Naive thymus-derived CD4-positive, alpha-beta T cell (primary cell): ENCODE measurements at regions of chr13 and their contacts with region 1.

Region 1: DNA sequence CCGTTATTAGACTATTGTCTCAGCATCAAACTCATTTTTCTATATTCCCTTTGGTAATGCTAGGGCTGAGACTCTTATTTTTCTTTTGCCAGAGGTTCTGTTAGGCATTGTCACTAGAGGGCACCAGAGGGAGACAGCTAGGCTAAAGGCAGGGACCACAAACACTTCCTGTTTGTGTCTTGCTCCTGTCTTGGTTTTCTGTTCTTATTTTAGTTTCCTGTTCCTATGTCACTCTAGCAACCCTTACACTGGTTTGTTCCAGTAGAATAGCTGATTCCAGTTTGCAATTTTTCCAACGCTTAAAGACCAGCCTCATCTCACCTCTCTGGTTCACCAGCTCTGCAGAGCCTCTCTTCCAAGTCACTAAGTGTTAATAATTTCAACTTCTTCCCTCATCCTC is 772.0 kb downstream of the DIAPH3 start:
- DNase-seq: peak; percentile 8 to 80 (median 73)
- ATAC-seq: peak; percentile 95
- H3K4me3 ChIP-seq: no peak overlapping the region
- H3K4me3 Mint-ChIP-seq: no peak overlapping the region
- H3K27ac ChIP-seq: no peak overlapping the region
- H3K27ac Mint-ChIP-seq: no peak overlapping the region
- H3K4me1 ChIP-seq: peaks cover 0 to 8% of the 10 kb centered on the region in 2 donors
- H3K4me1 Mint-ChIP-seq: peaks cover 0 to 6% (median 0%) of the 10 kb centered on the region in 7 donors
- H3K27me3 ChIP-seq: no peaks in the 10 kb centered on the region
- H3K27me3 Mint-ChIP-seq: peaks cover 0 to 22% (median 6%) of the 10 kb centered on the region in 5 donors

Region 2: DNA sequence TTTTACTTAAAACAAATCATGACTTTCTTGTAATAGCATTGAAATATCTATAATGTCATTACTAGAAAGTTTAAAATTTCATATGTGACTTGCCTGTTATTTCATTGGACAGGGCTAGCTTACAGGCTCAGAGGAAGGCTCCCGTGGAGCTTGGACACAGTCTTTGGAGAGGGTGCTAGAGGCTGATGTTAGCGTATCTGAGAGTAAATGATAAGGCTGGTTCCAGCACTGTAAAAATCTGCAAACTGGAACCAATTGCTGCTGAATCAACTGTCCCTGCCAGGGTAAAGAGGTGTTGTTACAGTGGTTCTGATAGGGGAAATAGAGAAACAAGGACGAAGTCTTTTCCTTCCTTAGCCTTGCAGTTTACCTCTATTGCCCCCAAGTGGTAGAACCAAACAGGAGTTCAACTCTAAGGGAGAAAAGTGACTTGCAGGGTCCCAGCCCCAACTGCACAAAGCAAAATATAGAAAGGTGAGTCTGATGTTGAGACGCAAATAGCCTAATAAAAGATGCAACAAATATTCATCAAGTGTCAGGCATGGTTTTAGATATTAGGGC is 129.7 kb before region 1 on chr13:
- CTCF ChIA-PET with region 1: no interaction called
- POLR2A ChIA-PET with region 1: no interaction called
- intact Hi-C with region 1: no loop called
- DNase-seq: no peak
- ATAC-seq: no peak
- H3K4me3 ChIP-seq: no peak overlapping the region
- H3K4me3 Mint-ChIP-seq: no peak overlapping the region
- H3K27ac ChIP-seq: no peak overlapping the region
- H3K27ac Mint-ChIP-seq: no peak overlapping the region
- H3K4me1 ChIP-seq: no peaks in the 10 kb centered on the region
- H3K4me1 Mint-ChIP-seq: no peaks in the 10 kb centered on the region
- H3K27me3 ChIP-seq: no peaks in the 10 kb centered on the region
- H3K27me3 Mint-ChIP-seq: no peaks in the 10 kb centered on the region

Region 3: GRCh38 chr13:59425211-59425721 is 33.6 kb after region 1 on chr13:
- CTCF ChIA-PET with region 1: no interaction called
- POLR2A ChIA-PET with region 1: no interaction called
- intact Hi-C with region 1: no loop called
- DNase-seq: no peak
- ATAC-seq: no peak
- H3K4me3 ChIP-seq: no peak overlapping the region
- H3K4me3 Mint-ChIP-seq: no peak overlapping the region
- H3K27ac ChIP-seq: no peak overlapping the region
- H3K27ac Mint-ChIP-seq: no peak overlapping the region
- H3K4me1 ChIP-seq: no peaks in the 10 kb centered on the region
- H3K4me1 Mint-ChIP-seq: no peaks in the 10 kb centered on the region
- H3K27me3 ChIP-seq: no peaks in the 10 kb centered on the region
- H3K27me3 Mint-ChIP-seq: peaks cover 0 to 10% (median 6%) of the 10 kb centered on the region in 5 donors

Region 4: GRCh38 chr13:59677966-59678814 is 286.5 kb after region 1 on chr13:
- CTCF ChIA-PET with region 1: interaction called, 40 read pairs
- POLR2A ChIA-PET with region 1: interaction called, 3 read pairs
- intact Hi-C with region 1: loop called (anchors 1 kb)
- DNase-seq: peak in 5 of 9 donors; percentile 21 to 34 (median 22)
- ATAC-seq: peak; percentile 67
- H3K4me3 ChIP-seq: no peak overlapping the region
- H3K4me3 Mint-ChIP-seq: no peak overlapping the region
- H3K27ac ChIP-seq: no peak overlapping the region
- H3K27ac Mint-ChIP-seq: peak overlapping the region in 1 of 9 donors; percentile 48
- H3K4me1 ChIP-seq: no peaks in the 10 kb centered on the region
- H3K4me1 Mint-ChIP-seq: peaks cover 0 to 5% (median under 1%) of the 10 kb centered on the region in 7 donors
- H3K27me3 ChIP-seq: no peaks in the 10 kb centered on the region
- H3K27me3 Mint-ChIP-seq: no peaks in the 10 kb centered on the region

Region 5: DNA sequence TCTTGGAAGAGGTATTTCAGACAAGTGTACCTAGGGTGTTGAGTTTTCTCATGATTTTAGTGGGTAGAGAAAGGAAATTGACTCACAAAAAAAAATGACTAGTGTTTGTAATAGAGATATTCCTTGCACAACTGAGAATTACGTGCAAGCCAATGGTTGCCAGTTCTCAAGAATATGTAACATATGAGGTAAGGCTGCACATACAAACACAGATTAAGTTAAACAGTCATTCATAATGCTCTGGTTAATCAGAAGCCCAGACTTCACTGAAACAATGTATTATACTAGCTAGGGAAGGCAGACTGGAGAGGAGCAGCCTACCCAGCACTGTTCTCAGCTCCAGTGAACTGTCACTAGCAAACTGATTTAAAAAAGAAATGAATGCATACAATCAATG is 353.7 kb after region 1 on chr13:
- CTCF ChIA-PET with region 1: no interaction called
- POLR2A ChIA-PET with region 1: no interaction called
- intact Hi-C with region 1: no loop called
- DNase-seq: no peak
- ATAC-seq: no peak
- H3K4me3 ChIP-seq: no peak overlapping the region
- H3K4me3 Mint-ChIP-seq: no peak overlapping the region
- H3K27ac ChIP-seq: no peak overlapping the region
- H3K27ac Mint-ChIP-seq: no peak overlapping the region
- H3K4me1 ChIP-seq: no peaks in the 10 kb centered on the region
- H3K4me1 Mint-ChIP-seq: peaks cover 0 to 5% (median 2%) of the 10 kb centered on the region in 7 donors
- H3K27me3 ChIP-seq: no peaks in the 10 kb centered on the region
- H3K27me3 Mint-ChIP-seq: peaks cover 0 to 4% (median 0%) of the 10 kb centered on the region in 5 donors

Region 6: GRCh38 chr13:59906413-59907049 is 514.8 kb after region 1 on chr13:
- CTCF ChIA-PET with region 1: no interaction called
- POLR2A ChIA-PET with region 1: no interaction called
- intact Hi-C with region 1: loop called in 1 of 2 experiments (anchors 1 kb)
- DNase-seq: peak in 2 of 9 donors; percentile 2 to 3
- ATAC-seq: no peak
- H3K4me3 ChIP-seq: no peak overlapping the region
- H3K4me3 Mint-ChIP-seq: no peak overlapping the region
- H3K27ac ChIP-seq: no peak overlapping the region
- H3K27ac Mint-ChIP-seq: no peak overlapping the region
- H3K4me1 ChIP-seq: no peaks in the 10 kb centered on the region
- H3K4me1 Mint-ChIP-seq: peaks cover 0 to 2% (median 0%) of the 10 kb centered on the region in 7 donors
- H3K27me3 ChIP-seq: no peaks in the 10 kb centered on the region
- H3K27me3 Mint-ChIP-seq: no peaks in the 10 kb centered on the region

Region 7: GRCh38 chr13:60329221-60329983 is 937.7 kb after region 1 on chr13:
- CTCF ChIA-PET with region 1: interaction called, 6 read pairs
- POLR2A ChIA-PET with region 1: no interaction called
- intact Hi-C with region 1: loop called in 1 of 2 experiments (anchors 1 kb)
- DNase-seq: peak in 1 of 9 donors; percentile 8
- ATAC-seq: no peak
- H3K4me3 ChIP-seq: no peak overlapping the region
- H3K4me3 Mint-ChIP-seq: no peak overlapping the region
- H3K27ac ChIP-seq: no peak overlapping the region
- H3K27ac Mint-ChIP-seq: peak overlapping the region in 1 of 9 donors; percentile 5
- H3K4me1 ChIP-seq: no peaks in the 10 kb centered on the region
- H3K4me1 Mint-ChIP-seq: peaks cover 0 to 5% (median 0%) of the 10 kb centered on the region in 7 donors
- H3K27me3 ChIP-seq: no peaks in the 10 kb centered on the region
- H3K27me3 Mint-ChIP-seq: peaks cover 0 to 21% (median 0%) of the 10 kb centered on the region in 5 donors

Region 8: DNA sequence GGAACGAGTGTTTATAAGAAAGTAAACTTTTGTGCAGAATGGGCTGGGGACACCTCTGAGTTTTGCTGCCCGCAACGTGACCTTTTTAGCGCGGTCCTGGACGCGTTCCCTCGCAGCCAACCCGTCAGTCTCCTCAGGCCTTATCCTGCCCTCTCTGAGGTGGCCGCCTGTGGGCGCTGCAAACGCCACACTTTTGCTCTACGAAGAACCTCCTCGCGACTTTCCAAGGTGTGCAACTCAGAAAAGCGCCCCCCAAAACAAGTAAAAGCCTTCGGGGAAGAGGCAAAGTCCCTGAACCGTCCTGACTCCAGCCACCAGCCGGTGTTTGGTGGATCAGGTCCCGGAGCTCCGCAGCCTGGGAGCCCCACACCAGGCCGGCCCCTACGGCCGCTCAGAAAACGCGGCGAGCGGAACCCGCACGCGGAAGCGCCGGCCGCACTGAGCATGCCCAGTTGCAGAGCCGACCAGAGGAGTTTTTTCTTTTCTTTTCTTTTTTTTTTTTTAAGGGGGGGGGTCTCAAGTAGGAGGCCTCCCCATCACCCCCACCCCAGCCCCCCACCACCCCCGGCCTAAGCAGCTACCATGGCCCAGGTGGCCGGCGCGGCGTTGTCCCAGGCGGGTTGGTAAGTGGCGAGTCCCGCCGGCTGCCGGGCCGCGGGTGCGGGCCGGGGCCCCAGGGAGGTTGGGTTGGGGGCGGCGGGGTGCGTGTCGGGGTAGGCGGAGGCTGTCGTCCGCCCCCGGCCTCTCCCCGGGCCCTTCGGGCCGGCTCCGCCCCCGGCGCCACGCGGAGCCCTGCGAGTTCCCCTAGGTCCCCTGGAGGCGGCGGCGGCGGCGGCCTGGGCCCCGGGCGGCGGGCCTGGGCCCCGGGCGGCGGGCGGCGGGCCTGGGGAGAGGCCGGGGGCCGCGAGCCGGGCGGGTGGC is 1005.3 kb after region 1 on chr13 and contains the start of gene TDRD3:
- CTCF ChIA-PET with region 1: no interaction called
- POLR2A ChIA-PET with region 1: interaction called, 3 read pairs
- intact Hi-C with region 1: loop called (anchors 2 kb)
- DNase-seq: peak; percentile 71 to 86 (median 82)
- ATAC-seq: peak; percentile 82
- H3K4me3 ChIP-seq: peak within 1 kb of the TSS; percentile 85
- H3K4me3 Mint-ChIP-seq: peak within 1 kb of the TSS; percentile 88 to 98 (median 95)
- H3K27ac ChIP-seq: peak within 1 kb of the TSS; percentile 80
- H3K27ac Mint-ChIP-seq: peak within 1 kb of the TSS; percentile 91 to 99 (median 96)
- H3K4me1 ChIP-seq: peaks cover 15 to 20% of the 10 kb centered on the region in 2 donors
- H3K4me1 Mint-ChIP-seq: peaks cover 25 to 54% (median 44%) of the 10 kb centered on the region in 7 donors
- H3K27me3 ChIP-seq: no peaks in the 10 kb centered on the region
- H3K27me3 Mint-ChIP-seq: no peaks in the 10 kb centered on the region
- total RNA-seq, gene TDRD3: 24.7 to 33.6 (median 27.2) TPM

Region 9: GRCh38 chr13:60417734-60418133 is 1026.0 kb after region 1 on chr13:
- CTCF ChIA-PET with region 1: no interaction called
- POLR2A ChIA-PET with region 1: no interaction called
- intact Hi-C with region 1: no loop called
- DNase-seq: no peak
- ATAC-seq: no peak
- H3K4me3 ChIP-seq: no peak overlapping the region
- H3K4me3 Mint-ChIP-seq: no peak overlapping the region
- H3K27ac ChIP-seq: no peak overlapping the region
- H3K27ac Mint-ChIP-seq: peak overlapping the region in 1 of 9 donors; percentile 43
- H3K4me1 ChIP-seq: no peaks in the 10 kb centered on the region
- H3K4me1 Mint-ChIP-seq: peaks cover 3 to 45% (median 20%) of the 10 kb centered on the region in 7 donors
- H3K27me3 ChIP-seq: no peaks in the 10 kb centered on the region
- H3K27me3 Mint-ChIP-seq: no peaks in the 10 kb centered on the region